Psoas muscle (tissue), 8 donors: ENCODE measurements at regions of chr17 and their contacts with region 1.

Region 1: GRCh38 chr17:35214631-35215273 is 20.6 kb upstream of the SLC35G3 start:
- DNase-seq: no peak
- ATAC-seq: no peak
- H3K4me3 ChIP-seq: no peak overlapping the region
- H3K27ac ChIP-seq: no peak overlapping the region
- H3K4me1 ChIP-seq: no peaks in the 10 kb centered on the region
- H3K27me3 ChIP-seq: no peaks in the 10 kb centered on the region
- CTCF ChIP-seq: no peak

Region 2: GRCh38 chr17:34797720-34798119 is 417.0 kb before region 1 on chr17:
- intact Hi-C with region 1: loop called in 1 of 2 experiments (anchors 10 kb)
- DNase-seq: no peak
- ATAC-seq: no peak
- H3K4me3 ChIP-seq: no peak overlapping the region
- H3K27ac ChIP-seq: no peak overlapping the region
- H3K4me1 ChIP-seq: no peaks in the 10 kb centered on the region
- H3K27me3 ChIP-seq: no peaks in the 10 kb centered on the region
- CTCF ChIP-seq: no peak

Region 3: DNA sequence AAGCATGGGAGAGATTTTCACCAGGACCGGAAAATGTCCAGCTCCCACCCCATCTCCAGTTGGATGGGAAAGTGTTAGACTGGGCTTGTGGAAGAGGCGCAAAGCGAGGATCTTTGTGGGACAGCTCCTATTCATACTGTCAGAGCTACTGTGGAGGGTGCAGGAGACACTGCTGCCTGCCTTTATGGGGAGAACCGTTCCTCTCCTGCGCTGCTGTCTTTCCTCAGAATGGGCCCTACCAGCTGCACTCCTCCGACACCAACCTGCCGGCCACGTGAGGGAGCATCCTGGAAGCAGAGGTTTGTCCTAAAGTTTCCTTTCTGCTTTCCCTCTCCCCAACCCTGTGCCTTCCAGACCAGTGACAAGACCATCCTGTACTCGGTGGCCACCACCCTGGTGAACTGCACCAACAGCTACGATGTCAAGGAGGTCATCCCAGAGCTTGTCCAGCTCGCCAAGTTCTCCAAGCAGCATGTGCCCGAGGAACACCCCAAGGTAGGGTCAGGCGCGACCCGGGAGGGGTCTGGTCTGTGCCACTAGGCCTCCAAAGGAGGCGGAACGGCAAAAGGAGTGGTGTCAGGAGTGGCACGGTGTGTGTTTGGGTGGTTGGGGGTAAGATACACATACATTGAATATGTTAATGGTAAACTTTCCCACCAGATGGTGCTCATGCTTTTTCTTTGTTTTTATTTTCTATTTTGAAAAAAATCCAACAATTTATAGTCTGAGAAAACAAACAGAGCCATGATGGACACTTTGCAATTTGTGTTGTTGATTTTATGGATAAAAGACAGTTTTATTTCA is 43.6 kb before region 1 on chr17:
- intact Hi-C with region 1: no loop called
- DNase-seq: no peak
- ATAC-seq: peak in 1 of 4 donors; percentile 33
- H3K4me3 ChIP-seq: no peak overlapping the region
- H3K27ac ChIP-seq: no peak overlapping the region
- H3K4me1 ChIP-seq: no peaks in the 10 kb centered on the region
- H3K27me3 ChIP-seq: no peaks in the 10 kb centered on the region
- CTCF ChIP-seq: no peak